ENCODE measurements at regions of chr12 and their contacts with region 1.

Region 1: DNA sequence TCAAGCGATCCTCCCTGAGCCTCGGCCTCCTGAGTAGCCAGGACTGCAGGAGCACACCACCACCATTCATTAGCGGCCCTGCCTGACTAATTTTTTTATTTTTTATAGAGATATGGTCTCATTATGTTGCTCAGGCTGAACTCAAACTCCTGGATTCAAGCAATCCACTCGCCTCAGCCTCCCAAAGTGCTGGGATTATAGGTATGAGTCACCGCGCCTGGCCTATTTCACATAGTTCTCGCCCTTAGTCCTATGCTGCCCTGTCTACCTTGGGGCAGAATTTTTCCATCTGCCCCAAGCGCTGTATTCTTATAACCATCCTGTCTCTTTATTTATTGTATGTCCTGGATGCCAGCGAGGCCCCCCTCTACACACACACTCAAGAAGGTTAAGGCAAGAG is 50.9 kb upstream of the BCL2L14 start:
- DNase-seq: no peak
- ATAC-seq: no peak
- H3K4me3 ChIP-seq: no peak overlapping the region
- H3K27ac ChIP-seq: no peak overlapping the region
- H3K4me1 ChIP-seq: no peaks in the 10 kb centered on the region
- H3K27me3 ChIP-seq: peaks cover 11% of the 10 kb centered on the region
- CTCF ChIP-seq: no peak
- POLR2A ChIP-seq: no peak
- RAD21 ChIP-seq: no peak

Region 2: DNA sequence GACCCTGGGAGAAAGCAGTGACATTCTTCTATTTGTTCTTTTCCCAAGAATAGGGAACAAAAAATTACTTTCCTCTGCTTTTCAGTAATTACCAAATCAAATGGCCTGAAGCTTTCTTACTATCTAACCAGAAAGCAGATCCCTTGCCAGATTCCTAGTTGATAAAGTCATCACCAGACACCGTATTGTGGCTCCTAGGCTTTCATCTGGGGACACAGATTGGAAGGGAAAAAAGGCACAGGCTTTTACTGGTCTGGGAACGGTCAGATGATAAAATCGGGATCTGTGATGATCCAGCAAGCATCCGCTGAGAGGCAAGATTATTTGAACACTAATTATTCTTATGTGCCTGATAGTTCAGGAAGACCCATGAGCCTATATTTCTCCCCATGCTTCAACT is 28.3 kb before region 1 on chr12:
- CTCF ChIA-PET with region 1: no interaction called
- POLR2A ChIA-PET with region 1: no interaction called
- dilution Hi-C with region 1: no loop called
- in situ Hi-C with region 1: no loop called
- intact Hi-C with region 1: loop called (anchors 1 kb)
- DNase-seq: no peak
- ATAC-seq: no peak
- H3K4me3 ChIP-seq: no peak overlapping the region
- H3K27ac ChIP-seq: no peak overlapping the region
- H3K4me1 ChIP-seq: no peaks in the 10 kb centered on the region
- H3K27me3 ChIP-seq: peaks cover 11% of the 10 kb centered on the region
- CTCF ChIP-seq: no peak
- POLR2A ChIP-seq: no peak
- RAD21 ChIP-seq: no peak

Region 3: GRCh38 chr12:12194206-12194605 is 174.3 kb after region 1 on chr12:
- CTCF ChIA-PET with region 1: no interaction called
- POLR2A ChIA-PET with region 1: no interaction called
- dilution Hi-C with region 1: no loop called
- in situ Hi-C with region 1: no loop called
- intact Hi-C with region 1: no loop called
- DNase-seq: peak; percentile 54
- ATAC-seq: no peak; the same call in 1 of the 2 replicates
- H3K4me3 ChIP-seq: no peak overlapping the region
- H3K27ac ChIP-seq: no peak overlapping the region
- H3K4me1 ChIP-seq: 0 out of 2 replicates have a peak, but pooled peaks cover 3% of the 10 kb centered on the region
- H3K27me3 ChIP-seq: no peaks in the 10 kb centered on the region
- CTCF ChIP-seq: no peak
- POLR2A ChIP-seq: no peak
- RAD21 ChIP-seq: no peak